Lower leg skin (tissue), 4 donors: ENCODE measurements at regions of chr6 and their contacts with region 1.

Region 1: GRCh38 chr6:43355862-43356590 is 13.4 kb downstream of the ZNF318 start:
- DNase-seq: no peak
- H3K4me3 ChIP-seq: no peak overlapping the region
- CTCF ChIP-seq: no peak
- POLR2A ChIP-seq: no peak

Region 2: DNA sequence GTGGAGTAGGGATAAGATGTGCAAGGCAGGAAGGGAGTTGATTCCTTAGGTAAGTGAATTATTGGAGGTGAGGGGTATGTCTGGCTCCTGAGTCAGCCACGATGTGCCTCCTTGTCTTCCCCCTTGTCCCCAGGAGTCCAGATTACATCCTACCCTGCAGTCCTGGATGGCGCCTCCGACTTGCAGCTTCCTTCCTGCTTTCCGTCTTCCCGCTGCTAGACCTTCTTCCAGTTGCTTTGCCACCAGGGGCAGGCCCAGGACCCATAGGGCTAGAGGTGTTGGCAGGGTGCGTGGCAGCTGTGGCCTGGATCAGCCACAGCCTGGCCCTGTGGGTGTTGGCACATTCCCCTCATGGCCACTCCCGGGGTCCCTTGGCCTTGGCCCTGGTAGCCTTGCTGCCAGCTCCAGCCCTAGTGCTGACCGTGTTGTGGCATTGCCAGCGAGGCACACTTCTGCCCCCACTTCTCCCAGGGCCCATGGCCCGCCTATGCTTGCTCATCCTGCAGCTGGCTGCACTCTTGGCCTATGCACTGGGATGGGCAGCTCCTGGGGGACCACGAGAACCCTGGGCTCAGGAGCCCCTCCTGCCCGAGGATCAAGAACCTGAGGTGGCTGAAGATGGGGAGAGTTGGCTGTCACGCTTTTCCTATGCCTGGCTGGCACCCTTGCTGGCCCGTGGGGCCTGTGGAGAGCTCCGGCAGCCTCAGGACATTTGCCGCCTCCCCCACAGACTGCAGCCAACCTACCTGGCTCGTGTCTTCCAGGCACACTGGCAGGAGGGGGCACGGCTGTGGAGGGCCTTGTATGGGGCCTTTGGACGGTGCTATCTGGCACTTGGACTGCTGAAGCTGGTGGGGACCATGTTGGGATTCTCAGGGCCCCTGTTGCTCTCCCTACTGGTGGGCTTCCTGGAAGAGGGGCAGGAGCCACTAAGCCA is 76.3 kb after region 1 on chr6:
- intact Hi-C with region 1: loop called (anchors 2 kb)
- DNase-seq: no peak
- H3K4me3 ChIP-seq: no peak overlapping the region
- CTCF ChIP-seq: no peak
- POLR2A ChIP-seq: no peak

Region 3: DNA sequence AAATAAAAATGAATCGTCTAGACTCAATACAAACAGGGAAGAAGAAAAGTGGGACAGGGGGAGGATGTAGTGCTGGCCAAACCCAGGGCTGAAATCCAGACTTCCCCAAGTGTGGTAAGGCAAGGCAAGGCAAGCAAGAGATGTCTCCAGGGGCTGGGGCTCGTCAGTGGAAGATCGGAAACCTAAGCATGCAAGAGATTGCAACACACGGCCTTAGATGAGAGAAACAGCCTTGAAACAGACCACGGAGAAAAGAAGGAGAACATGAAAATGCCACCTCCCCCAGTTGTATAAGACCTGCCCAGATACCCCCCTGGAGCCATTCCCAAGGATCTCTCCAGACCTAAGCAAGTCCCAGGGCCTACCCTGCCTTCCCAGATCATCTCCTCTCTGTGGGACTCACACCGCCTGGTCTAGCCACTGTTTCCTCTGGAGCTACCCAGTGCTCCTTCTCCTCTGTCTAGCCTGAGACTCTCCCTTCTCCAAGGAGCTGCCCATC is 434.0 kb after region 1 on chr6:
- intact Hi-C with region 1: no loop called
- DNase-seq: no peak
- H3K4me3 ChIP-seq: no peak overlapping the region
- CTCF ChIP-seq: no peak
- POLR2A ChIP-seq: no peak